Posterior vena cava (tissue), 2 donors: ENCODE measurements at regions of chr2 and their contacts with region 1.

Region 1: GRCh38 chr2:70124983-70125480 is 37.8 kb downstream of the PCBP1 start:
- DNase-seq: peak; percentile 90

Region 2: GRCh38 chr2:69770193-69771146 is 354.6 kb before region 1 on chr2:
- intact Hi-C with region 1: loop called in 1 of 2 experiments (anchors 10 kb)
- DNase-seq: no peak